Posterior vena cava (tissue), 2 donors: ENCODE measurements at regions of chr18 and their contacts with region 1.

Region 1: GRCh38 chr18:27130065-27130630 is 55.0 kb downstream of the CHST9 start:
- DNase-seq: no peak

Region 2: GRCh38 chr18:26804519-26804918 is 325.6 kb before region 1 on chr18:
- intact Hi-C with region 1: no loop called
- DNase-seq: no peak

Region 3: GRCh38 chr18:26875040-26875654 is 255.0 kb before region 1 on chr18:
- intact Hi-C with region 1: loop called in 1 of 2 experiments (anchors 5 kb)
- DNase-seq: no peak